Activated CD4-positive, alpha-beta memory T cell treated with anti-CD3 and anti-CD28 coated beads for 36 hours (primary cell): ENCODE measurements at regions of chr1 and their contacts with region 1.

Region 1: DNA sequence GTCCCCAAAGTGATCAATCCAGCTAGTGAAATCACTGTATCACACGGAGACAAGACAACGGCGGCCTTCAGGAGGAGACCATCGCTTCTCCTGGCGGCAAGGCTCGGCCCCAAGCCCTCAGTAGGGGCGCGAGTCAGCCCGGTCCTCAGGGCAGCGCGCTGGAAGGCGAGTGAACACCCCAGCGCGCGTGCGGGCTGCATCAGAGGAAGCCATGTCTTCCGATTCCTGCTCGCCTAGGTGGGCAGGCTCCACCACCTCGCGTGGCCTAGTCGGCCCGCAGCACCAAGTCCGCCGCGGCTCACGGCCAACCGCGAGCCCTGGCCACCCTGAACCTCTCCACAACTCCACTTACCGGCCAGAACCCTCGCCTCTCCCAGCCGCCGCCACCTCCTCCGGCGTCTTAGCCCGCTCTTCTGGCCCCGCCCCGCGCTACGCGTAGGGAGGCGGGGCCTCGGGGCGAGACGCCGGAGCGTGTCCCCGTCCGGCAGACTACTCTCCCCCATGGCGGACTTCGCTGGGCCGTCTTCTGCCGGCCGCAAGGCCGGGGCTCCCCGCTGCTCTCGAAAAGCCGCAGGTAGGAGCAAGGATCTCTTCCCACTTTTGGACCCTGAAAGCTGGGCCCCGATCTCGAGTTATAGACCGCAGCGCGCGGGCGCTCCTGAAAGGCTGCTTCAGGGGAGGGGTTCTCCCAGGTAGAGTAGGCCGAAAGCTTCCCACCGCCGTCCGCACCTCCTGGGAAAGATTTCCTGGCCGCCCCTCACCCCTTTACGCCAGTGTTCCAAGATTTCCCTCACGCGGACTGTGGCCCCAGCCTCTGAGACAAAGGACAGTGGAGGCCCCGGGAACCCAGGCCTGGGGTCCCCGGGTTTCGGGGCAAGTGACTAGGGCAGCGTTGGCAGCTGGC is at the starts of genes GLMN and RPAP2:
- DNase-seq: peak; percentile 78
- H3K4me3 Mint-ChIP-seq: peak within 1 kb of the TSS; percentile 91
- H3K27ac Mint-ChIP-seq: peak within 1 kb of the TSS; percentile 95
- H3K4me1 Mint-ChIP-seq: peaks cover 31% of the 10 kb centered on the region
- H3K27me3 Mint-ChIP-seq: no peaks in the 10 kb centered on the region
- total RNA-seq, gene GLMN: 10.9 to 13.3 TPM
- total RNA-seq, gene RPAP2: 28.6 to 31.6 TPM

Region 2: DNA sequence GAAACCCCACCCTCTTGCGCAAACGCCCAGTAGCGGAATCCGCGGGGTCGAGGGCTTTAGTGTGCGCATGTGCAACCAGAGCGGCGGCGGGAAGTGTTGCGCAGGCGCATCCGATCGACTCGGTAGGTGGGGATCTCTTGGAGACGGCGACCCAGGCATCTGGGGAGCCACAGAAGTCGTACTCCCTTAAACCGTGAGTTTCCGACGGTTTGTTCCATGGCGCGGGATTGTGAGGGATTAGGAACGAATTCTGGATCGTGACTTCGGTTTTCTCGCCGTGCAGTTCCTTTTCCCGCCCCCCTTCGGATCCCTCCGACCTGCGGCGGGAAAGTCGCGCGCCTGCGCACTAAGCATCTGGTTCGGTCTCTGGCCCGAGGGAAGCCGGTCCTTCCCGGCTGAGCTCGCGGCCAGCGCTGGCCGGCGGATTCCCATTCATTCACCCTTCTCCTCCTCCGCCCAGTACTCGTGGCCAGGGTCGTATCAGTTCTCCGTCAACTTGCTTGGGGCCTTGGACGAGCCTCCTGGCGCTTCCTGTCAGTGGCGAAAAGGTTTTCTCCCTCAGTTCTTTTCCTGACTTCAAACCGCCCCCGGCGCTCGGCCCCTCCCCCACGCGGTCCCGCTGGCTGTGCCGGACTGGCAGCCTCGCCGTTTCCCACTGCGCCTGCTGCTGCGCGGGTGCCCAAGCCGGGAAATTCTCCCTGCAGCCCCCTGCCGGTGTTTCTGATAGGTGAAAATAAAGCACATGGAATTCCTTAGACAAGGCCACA is 797.9 kb before region 1 on chr1 and contains the start of gene CDC7:
- CTCF ChIA-PET with region 1: no interaction called
- POLR2A ChIA-PET with region 1: no interaction called
- intact Hi-C with region 1: loop called (anchors 10 kb)
- DNase-seq: peak; percentile 88
- H3K4me3 Mint-ChIP-seq: no peak within 1 kb of the TSS
- H3K27ac Mint-ChIP-seq: no peak within 1 kb of the TSS
- H3K4me1 Mint-ChIP-seq: peaks cover 16% of the 10 kb centered on the region
- H3K27me3 Mint-ChIP-seq: no peaks in the 10 kb centered on the region
- total RNA-seq, gene CDC7: 20.2 to 20.4 TPM

Region 3: GRCh38 chr1:92080128-92080985 is 218.5 kb before region 1 on chr1 and contains the start of gene BTBD8:
- CTCF ChIA-PET with region 1: no interaction called
- POLR2A ChIA-PET with region 1: no interaction called
- intact Hi-C with region 1: loop called (anchors 2 kb)
- DNase-seq: peak; percentile 90
- H3K4me3 Mint-ChIP-seq: peak within 1 kb of the TSS; percentile 96
- H3K27ac Mint-ChIP-seq: peak within 1 kb of the TSS; percentile 74
- H3K4me1 Mint-ChIP-seq: peaks cover 5% of the 10 kb centered on the region
- H3K27me3 Mint-ChIP-seq: no peaks in the 10 kb centered on the region
- total RNA-seq, gene BTBD8: 2.9 TPM

Region 4: DNA sequence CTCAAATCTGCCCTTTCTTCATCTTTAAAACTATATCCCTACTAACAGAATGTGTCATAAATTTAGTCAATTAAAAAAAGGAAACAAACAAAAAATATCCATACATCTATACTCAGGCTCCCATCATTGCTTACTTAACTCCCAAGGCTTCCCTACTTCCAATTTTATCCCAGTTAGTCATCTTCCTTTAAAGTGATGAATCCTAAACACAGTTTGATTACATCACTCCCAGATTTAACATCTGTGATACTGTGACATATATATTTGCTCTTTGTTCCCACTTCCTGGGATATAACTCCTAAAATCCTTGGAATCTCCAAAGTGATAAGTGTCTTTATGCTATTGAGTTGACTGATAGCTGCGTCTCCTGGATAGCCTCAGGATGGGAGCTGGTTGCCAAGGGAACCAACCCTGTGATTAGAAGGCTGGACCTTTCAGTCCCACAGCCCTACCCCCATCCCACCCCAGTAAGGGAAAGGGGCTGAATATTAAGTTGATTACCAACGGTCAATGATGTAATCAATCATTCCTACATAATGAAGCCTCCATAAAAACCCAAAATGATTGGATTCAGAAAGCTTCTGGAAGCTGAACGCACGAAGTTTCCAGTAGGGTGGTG is 21.6 kb before region 1 on chr1:
- CTCF ChIA-PET with region 1: no interaction called
- POLR2A ChIA-PET with region 1: no interaction called
- intact Hi-C with region 1: no loop called
- DNase-seq: no peak
- H3K4me3 Mint-ChIP-seq: no peak overlapping the region
- H3K27ac Mint-ChIP-seq: no peak overlapping the region
- H3K4me1 Mint-ChIP-seq: peaks cover 2% of the 10 kb centered on the region
- H3K27me3 Mint-ChIP-seq: no peaks in the 10 kb centered on the region

Region 5: GRCh38 chr1:92310185-92310597 is 11.4 kb after region 1 on chr1:
- CTCF ChIA-PET with region 1: interaction called, 12 read pairs
- POLR2A ChIA-PET with region 1: interaction called, 3 read pairs
- intact Hi-C with region 1: no loop called
- DNase-seq: no peak
- H3K4me3 Mint-ChIP-seq: no peak overlapping the region
- H3K27ac Mint-ChIP-seq: no peak overlapping the region
- H3K4me1 Mint-ChIP-seq: peaks cover 39% of the 10 kb centered on the region
- H3K27me3 Mint-ChIP-seq: no peaks in the 10 kb centered on the region

Region 6: GRCh38 chr1:92623187-92623778 is 324.5 kb after region 1 on chr1:
- CTCF ChIA-PET with region 1: interaction called, 3 read pairs
- POLR2A ChIA-PET with region 1: no interaction called
- intact Hi-C with region 1: loop called (anchors 5 kb)
- DNase-seq: no peak
- H3K4me3 Mint-ChIP-seq: no peak overlapping the region
- H3K27ac Mint-ChIP-seq: no peak overlapping the region
- H3K4me1 Mint-ChIP-seq: peaks cover 11% of the 10 kb centered on the region
- H3K27me3 Mint-ChIP-seq: no peaks in the 10 kb centered on the region